HAP-1 (cell line): ENCODE measurements at regions of chr7 and their contacts with region 1.

Region 1: GRCh38 chr7:121563177-121563576 is 167.1 kb upstream of the FAM3C start:
- DNase-seq: peak in 1 of 2 experiments; percentile 20
- H3K4me3 ChIP-seq: no peak overlapping the region
- H3K4me1 ChIP-seq: no peaks in the 10 kb centered on the region
- H3K27me3 ChIP-seq: no peaks in the 10 kb centered on the region

Region 2: DNA sequence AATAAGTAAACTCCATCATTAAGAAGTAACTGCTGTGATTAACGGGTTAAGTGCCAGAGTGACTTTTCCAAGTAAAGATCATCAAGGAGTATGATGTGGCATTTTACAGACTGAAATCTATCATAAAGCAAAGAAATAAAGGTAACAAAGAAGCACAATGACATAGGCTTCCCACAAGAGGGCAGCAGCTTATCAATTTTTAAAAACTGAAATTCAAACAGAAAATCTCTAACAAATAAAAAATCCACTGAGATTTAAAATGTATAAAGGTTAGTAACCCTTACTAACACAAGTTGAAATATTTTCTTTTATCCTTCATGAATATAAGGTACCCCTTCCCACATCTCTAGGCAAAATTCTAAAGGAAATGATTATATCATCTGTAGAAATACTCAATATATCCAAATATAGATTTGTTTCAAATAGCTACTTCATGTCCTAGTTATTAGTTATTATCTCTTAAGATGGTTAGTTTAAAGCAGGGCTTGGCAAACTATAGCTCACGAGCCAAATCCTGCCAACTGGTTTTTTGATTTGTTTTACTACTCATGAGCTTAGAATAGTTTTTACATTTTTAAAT is 196.2 kb before region 1 on chr7:
- in situ Hi-C with region 1: loop called (anchors 10 kb)
- DNase-seq: peak; percentile 25 to 44
- H3K4me3 ChIP-seq: no peak overlapping the region
- H3K4me1 ChIP-seq: peaks cover 10% of the 10 kb centered on the region
- H3K27me3 ChIP-seq: no peaks in the 10 kb centered on the region

Region 3: DNA sequence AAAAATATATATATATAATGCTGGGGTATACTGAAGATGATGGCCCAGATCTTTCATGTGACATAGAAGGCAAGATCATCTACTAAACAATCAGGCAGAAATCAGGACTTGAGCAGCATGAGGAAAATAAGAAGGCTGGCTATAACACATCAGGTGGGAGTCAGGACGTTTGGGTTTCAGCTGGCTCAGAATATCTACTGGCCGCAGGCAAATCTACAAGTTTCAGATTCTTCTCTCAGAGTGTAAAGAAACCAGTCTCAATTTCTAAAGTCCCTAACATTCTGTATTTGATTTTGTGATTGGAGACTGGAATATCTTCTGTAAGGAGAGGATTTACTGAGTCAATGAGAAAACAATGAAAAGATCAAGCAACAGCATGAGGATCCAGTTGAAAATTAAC is 129.4 kb before region 1 on chr7:
- in situ Hi-C with region 1: no loop called
- DNase-seq: no peak
- H3K4me3 ChIP-seq: no peak overlapping the region
- H3K4me1 ChIP-seq: peaks cover 9% of the 10 kb centered on the region
- H3K27me3 ChIP-seq: no peaks in the 10 kb centered on the region

Region 4: GRCh38 chr7:122290476-122290875 is 727.3 kb after region 1 on chr7:
- in situ Hi-C with region 1: no loop called
- DNase-seq: no peak
- H3K4me3 ChIP-seq: no peak overlapping the region
- H3K4me1 ChIP-seq: no peaks in the 10 kb centered on the region
- H3K27me3 ChIP-seq: no peaks in the 10 kb centered on the region